ENCODE measurements at regions of chr20 and their contacts with region 1.

Region 1: DNA sequence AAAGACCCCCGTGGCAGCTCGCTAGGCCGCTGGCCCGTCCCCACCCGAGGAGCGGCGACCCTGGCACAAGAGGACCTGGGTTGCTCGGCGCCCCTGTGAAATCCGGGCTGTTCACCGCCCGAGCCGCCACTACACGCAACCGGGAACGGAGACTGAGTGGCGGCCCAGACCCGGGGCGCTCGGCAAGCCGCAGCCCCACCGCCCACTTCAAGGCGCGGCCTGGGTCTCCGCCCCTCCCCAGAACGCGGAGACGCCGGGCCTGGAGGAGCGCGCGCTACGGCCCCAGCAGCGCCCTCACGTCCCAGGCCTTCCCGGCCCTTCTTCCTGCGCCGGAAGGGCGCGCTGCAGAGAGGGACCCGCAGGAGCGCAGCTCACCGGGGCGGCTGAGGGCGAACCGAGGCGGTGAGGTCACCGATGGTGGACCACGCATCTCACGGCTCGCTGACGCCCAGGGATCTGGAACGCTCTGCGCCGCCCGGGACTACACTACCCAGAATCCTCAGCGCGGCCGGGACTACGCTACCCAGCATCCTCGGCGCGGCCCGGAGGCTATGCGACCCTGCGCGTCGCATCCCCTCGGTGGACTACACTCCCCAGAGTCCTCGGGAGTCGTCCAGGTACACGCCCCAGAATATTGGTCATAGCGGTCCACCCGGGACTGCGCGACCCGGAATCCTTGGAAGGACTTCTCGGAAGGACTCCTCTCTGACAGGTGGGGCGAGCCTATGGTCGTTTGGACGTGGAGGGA is at the start of gene ZNF337:
- DNase-seq: peak; percentile 93
- ATAC-seq: peak; percentile 97
- H3K4me3 ChIP-seq: peak within 1 kb of the TSS; percentile 34 to 92 (median 84)
- H3K4me3 Mint-ChIP-seq: peak within 1 kb of the TSS; percentile 96
- H3K27ac ChIP-seq: peak within 1 kb of the TSS; percentile 71 to 90
- H3K27ac Mint-ChIP-seq: peak within 1 kb of the TSS; percentile 93
- H3K4me1 ChIP-seq: peaks cover 4 to 7% of the 10 kb centered on the region in 2 donors
- H3K4me1 Mint-ChIP-seq: peaks cover 26% of the 10 kb centered on the region
- H3K27me3 ChIP-seq: no peaks in the 10 kb centered on the region
- H3K27me3 Mint-ChIP-seq: no peaks in the 10 kb centered on the region
- CTCF ChIP-seq: no peak
- total RNA-seq, gene ZNF337: 24.7 and 27.1 TPM in 2 replicates

Region 2: DNA sequence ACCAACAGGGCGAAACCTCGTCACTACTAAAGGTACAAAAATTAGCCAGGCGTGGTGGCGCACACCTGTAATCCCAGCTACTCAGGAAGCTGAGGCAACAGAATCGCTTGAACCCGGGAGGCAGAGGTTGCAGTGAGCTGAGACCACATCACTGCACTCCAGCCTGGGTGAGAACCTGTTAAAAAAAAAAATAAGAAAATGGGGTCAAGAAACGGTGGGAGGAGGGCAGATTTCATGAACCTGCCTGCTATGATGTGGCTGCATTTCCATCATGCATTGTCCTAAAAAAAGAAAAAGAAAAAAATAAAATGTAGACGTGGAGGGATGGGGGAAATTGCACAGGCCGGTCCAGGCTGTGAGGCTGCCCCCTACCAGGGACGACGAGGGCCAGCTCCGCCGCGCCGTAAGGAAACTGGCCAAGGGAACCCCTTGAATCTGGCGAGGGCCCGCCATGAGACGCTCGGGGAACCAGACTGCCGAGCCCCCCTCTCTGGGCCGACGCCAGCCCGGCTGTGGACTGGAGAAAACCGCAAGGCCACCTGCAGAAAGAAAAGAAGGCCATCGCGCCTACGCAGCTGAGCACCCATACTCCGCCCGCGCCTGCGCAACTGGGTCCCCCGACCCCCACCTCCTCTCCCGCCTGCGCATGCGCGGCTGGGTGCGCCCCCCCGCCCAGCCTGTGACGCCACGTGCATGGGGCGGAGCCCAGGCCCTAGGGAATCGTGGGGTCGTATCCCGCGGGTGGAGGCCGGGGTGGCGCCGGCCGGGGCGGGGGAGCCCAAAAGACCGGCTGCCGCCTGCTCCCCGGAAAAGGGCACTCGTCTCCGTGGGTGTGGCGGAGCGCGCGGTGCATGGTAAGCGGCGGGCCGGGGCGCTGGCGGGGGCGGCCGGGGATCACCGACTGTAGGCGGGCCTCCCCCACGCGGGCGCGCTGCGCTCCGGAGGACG is 501.3 kb before region 1 on chr20 and contains the start of gene ENTPD6:
- CTCF ChIA-PET with region 1: no interaction called
- POLR2A ChIA-PET with region 1: no interaction called
- intact Hi-C with region 1: loop called (anchors 2 kb)
- DNase-seq: peak; percentile 95
- ATAC-seq: peak; percentile 85
- H3K4me3 ChIP-seq: peak within 1 kb of the TSS; percentile 55 to 91 (median 88)
- H3K4me3 Mint-ChIP-seq: peak within 1 kb of the TSS; percentile 94
- H3K27ac ChIP-seq: peak within 1 kb of the TSS; percentile 63 to 86
- H3K27ac Mint-ChIP-seq: peak within 1 kb of the TSS; percentile 92
- H3K4me1 ChIP-seq: peaks cover 15 to 24% of the 10 kb centered on the region in 2 donors
- H3K4me1 Mint-ChIP-seq: peaks cover 37% of the 10 kb centered on the region
- H3K27me3 ChIP-seq: no peaks in the 10 kb centered on the region
- H3K27me3 Mint-ChIP-seq: peaks cover 1% of the 10 kb centered on the region
- CTCF ChIP-seq: no peak
- total RNA-seq, gene ENTPD6: 64.4 and 71.3 TPM in 2 replicates

Region 3: DNA sequence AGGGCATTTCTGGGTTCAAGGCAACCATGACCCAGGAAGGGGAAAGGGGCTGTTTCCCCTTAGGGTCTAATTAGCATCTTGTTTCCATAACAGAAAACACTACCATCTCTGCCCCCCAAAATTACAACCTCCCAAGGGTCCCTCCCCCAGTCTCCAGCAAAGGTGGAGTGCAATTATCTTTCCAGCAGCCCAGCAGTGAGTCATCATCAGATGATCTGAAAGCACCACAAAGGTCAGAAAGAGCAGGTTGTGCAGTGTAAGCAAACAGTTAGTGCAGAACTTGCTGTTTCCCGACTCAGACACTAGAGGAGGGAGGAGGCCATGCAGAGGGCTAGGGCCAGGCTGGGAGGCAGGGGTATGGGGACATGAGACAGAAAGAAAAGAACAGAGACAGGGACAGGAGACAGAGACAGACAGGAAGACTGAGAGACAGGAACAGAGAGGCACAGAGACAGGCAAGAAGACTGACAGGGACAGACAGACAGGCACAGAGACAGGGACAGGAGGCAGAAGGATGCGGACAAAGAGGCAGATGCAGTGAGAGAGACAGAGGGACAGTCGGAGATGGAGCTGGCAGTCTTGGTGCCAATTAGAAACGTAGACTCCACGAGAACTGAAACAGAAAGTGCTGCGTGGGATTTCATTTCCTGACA is 386.2 kb before region 1 on chr20:
- CTCF ChIA-PET with region 1: no interaction called
- POLR2A ChIA-PET with region 1: no interaction called
- intact Hi-C with region 1: loop called (anchors 5 kb)
- DNase-seq: no peak
- ATAC-seq: peak; percentile 90
- H3K4me3 ChIP-seq: peak overlapping the region in 4 of 5 experiments; percentile 0 to 16 (median 4)
- H3K4me3 Mint-ChIP-seq: peak overlapping the region; percentile 70
- H3K27ac ChIP-seq: peak overlapping the region in 1 of 2 donors; percentile 16
- H3K27ac Mint-ChIP-seq: peak overlapping the region; percentile 82
- H3K4me1 ChIP-seq: peaks cover 10 to 19% of the 10 kb centered on the region in 2 donors
- H3K4me1 Mint-ChIP-seq: peaks cover 24% of the 10 kb centered on the region
- H3K27me3 ChIP-seq: no peaks in the 10 kb centered on the region
- H3K27me3 Mint-ChIP-seq: no peaks in the 10 kb centered on the region
- CTCF ChIP-seq: no peak

Region 4: DNA sequence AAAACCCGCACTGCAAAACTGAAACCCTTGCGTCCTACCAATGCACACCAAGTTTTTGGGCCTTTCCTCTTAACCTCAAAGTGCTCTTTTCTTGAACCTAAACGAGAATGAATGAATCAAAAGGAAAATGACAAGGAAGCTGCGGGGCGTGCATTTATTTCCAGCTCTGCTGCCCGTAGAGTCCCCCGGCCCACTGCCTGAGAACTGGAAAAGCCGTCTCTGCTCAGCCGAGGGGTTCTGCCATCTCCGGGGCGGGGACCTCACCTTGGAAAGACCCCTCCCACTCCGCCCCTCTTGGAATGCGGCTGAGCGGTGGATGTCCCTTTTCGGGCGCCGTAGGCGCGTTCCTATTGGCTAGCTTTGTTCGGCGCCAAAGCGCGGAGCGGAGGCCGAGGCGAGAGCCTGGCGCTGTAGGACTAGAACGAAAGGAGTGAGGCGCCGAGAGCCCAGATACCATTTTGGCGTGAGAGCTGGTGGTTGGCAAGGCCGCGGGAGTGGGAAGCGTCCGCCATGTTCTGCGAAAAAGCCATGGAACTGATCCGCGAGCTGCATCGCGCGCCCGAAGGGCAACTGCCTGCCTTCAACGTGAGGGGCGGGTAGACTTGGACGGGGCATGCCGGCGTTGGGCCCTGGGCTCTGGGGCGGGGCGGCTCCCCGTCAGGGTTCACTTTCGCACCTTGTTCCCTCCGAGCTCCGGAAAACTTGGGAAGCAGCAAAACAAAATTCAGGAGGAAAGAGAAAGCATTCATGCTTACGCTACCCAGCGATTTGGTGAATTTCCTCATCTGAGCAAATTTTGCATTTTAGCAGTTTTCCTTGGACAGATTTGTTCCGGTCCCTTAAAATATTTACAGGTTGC is 289.0 kb before region 1 on chr20 and contains the start of gene GINS1:
- CTCF ChIA-PET with region 1: no interaction called
- POLR2A ChIA-PET with region 1: no interaction called
- intact Hi-C with region 1: loop called (anchors 1 kb)
- DNase-seq: peak; percentile 83
- ATAC-seq: peak; percentile 95
- H3K4me3 ChIP-seq: peak within 1 kb of the TSS; percentile 71 to 80 (median 74)
- H3K4me3 Mint-ChIP-seq: peak within 1 kb of the TSS; percentile 95
- H3K27ac ChIP-seq: peak within 1 kb of the TSS in 1 of 2 donors; percentile 69
- H3K27ac Mint-ChIP-seq: peak within 1 kb of the TSS; percentile 85
- H3K4me1 ChIP-seq: peaks cover 5 to 6% of the 10 kb centered on the region in 2 donors
- H3K4me1 Mint-ChIP-seq: peaks cover 12% of the 10 kb centered on the region
- H3K27me3 ChIP-seq: no peaks in the 10 kb centered on the region
- H3K27me3 Mint-ChIP-seq: no peaks in the 10 kb centered on the region
- CTCF ChIP-seq: no peak
- total RNA-seq, gene GINS1: 2.0 and 3.6 TPM in 2 replicates

Region 5: GRCh38 chr20:25623736-25624499 is 72.6 kb before region 1 on chr20 and contains the start of gene NANP:
- CTCF ChIA-PET with region 1: no interaction called
- POLR2A ChIA-PET with region 1: no interaction called
- intact Hi-C with region 1: loop called (anchors 1 kb)
- DNase-seq: peak; percentile 95
- ATAC-seq: peak; percentile 84
- H3K4me3 ChIP-seq: peak within 1 kb of the TSS; percentile 70 to 97 (median 89)
- H3K4me3 Mint-ChIP-seq: peak within 1 kb of the TSS; percentile 98
- H3K27ac ChIP-seq: peak within 1 kb of the TSS; percentile 68 to 90
- H3K27ac Mint-ChIP-seq: peak within 1 kb of the TSS; percentile 98
- H3K4me1 ChIP-seq: peaks cover 18% of the 10 kb centered on the region in 2 donors
- H3K4me1 Mint-ChIP-seq: peaks cover 32% of the 10 kb centered on the region
- H3K27me3 ChIP-seq: no peaks in the 10 kb centered on the region
- H3K27me3 Mint-ChIP-seq: no peaks in the 10 kb centered on the region
- CTCF ChIP-seq: no peak
- total RNA-seq, gene NANP: 1.8 and 2.3 TPM in 2 replicates

Measured in B cell (primary cell).